PC-9 (cell line): ENCODE measurements at regions of chr19 and their contacts with region 1.

Region 1: GRCh38 chr19:14571695-14572490 is at the start of gene NDUFB7:
- DNase-seq: peak; percentile 88 to 93
- H3K4me3 ChIP-seq: peak within 1 kb of the TSS; percentile 66
- H3K27ac ChIP-seq: 0 out of 2 replicates have a peak within 1 kb of the TSS, but pooled peaks have one; percentile 10
- H3K4me1 ChIP-seq: peaks cover 14% of the 10 kb centered on the region
- H3K27me3 ChIP-seq: no peaks in the 10 kb centered on the region
- CTCF ChIP-seq: peak; percentile 69
- total RNA-seq, gene NDUFB7: 192 and 248 TPM in 2 replicates

Region 2: DNA sequence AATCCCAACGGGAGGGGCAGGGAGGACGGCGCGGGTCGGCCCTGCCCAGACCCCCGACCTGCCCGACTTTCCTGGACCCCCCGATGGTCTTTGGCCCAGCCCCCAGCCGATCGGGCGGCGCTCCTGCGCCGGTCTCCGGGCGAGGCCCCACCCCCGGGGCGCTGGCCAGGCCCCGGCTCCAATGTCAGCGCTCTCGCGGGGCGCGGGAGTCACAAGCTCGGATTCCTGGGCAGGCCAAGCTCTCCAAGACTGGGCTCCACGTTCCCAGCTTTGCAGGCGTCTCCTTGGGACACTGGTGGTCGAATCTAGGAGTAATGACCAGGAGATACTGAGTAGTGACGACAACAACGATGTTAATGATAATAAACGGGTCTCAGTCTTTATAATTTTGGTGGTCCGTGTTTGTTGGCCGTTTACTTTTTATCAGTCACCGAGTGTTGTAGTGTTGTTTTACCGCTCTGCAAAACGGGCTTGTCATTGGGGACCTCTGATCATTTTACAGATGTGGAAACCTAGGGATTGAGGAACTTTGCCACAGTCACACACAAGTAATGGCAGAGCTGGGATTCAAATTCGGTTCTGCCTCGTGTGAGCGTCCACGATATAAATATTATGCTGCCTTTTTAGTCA is 1625.7 kb before region 1 on chr19:
- CTCF ChIA-PET with region 1: no interaction called
- POLR2A ChIA-PET with region 1: interaction called, 10 read pairs
- intact Hi-C with region 1: no loop called
- DNase-seq: peak; percentile 70 to 73
- H3K4me3 ChIP-seq: peak overlapping the region; percentile 77
- H3K27ac ChIP-seq: peak overlapping the region; percentile 89
- H3K4me1 ChIP-seq: peaks cover 23% of the 10 kb centered on the region
- H3K27me3 ChIP-seq: no peaks in the 10 kb centered on the region
- CTCF ChIP-seq: no peak

Region 3: DNA sequence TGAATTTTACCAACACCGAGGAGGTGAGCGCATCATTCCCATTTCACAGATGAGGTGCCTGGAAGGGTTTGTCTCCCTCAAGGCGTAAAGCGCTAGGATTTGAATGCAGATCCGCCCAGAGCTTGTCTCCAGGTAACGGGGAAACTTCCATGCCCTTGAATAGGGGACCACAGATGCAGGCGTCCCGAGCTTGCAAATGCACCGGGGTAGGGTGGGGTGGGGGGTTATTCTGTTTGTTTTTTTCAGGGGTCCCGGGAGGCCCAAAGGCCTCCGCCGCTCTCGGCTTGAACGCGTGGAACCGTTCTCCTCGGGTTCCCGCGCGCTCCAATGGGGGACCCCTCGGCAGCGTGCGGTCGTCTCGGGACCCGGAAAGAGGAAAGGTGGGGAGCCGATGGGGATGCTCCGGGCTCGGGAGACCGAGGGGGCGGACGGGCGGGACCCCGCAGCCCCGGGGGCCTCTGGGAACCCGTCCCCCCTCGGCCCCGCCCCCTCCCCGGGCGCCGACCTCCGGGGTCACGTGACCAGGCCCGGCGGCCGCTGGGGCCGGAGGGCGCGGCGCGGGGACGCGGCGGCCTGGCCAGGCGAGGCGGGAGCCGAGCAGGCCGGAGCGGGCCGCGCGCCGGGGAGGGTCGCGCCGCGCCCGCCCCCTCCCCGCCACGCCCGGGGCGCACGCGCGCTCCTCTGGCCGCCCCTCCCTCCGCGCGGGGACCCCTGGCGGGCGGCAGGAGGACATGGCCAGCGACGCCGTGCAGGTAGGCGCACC is 138.9 kb before region 1 on chr19 and contains the start of gene PKN1:
- CTCF ChIA-PET with region 1: interaction called, 14 read pairs
- POLR2A ChIA-PET with region 1: no interaction called
- intact Hi-C with region 1: no loop called
- DNase-seq: peak; percentile 38 to 66
- H3K4me3 ChIP-seq: peak within 1 kb of the TSS; percentile 93
- H3K27ac ChIP-seq: peak within 1 kb of the TSS; percentile 51
- H3K4me1 ChIP-seq: peaks cover 24% of the 10 kb centered on the region
- H3K27me3 ChIP-seq: no peaks in the 10 kb centered on the region; the same call in 1 of the 2 replicates
- CTCF ChIP-seq: no peak
- total RNA-seq, gene PKN1: 257 and 417 TPM in 2 replicates

Region 4: DNA sequence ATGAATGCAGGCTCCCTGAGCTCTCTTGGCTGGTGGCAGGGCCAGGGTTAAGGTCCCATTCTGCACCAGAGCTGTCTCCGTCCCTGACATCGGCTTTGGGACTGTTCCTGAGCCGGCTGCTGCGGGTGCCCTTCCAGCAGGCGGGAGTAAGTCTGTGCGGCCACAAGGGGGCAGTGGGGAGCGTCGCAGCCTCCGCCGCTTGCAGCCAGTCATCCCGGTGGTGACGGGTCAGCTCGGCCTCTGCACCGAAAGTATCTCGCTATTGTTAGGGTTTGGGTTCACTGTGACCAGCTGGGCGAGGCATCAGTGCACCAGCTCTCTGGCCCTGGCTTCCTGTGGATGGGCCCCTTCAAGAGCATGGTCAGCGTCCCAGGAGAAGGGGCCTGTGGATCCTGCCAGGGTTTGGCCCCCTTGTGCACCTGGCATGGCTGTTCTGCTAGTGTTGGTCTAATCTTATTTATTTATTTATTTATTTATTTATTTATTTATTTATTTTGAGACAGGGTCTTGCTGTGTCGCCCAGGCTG is 15.2 kb before region 1 on chr19:
- CTCF ChIA-PET with region 1: no interaction called
- POLR2A ChIA-PET with region 1: no interaction called
- intact Hi-C with region 1: no loop called
- DNase-seq: peak; percentile 59 to 77
- H3K4me3 ChIP-seq: no peak overlapping the region
- H3K27ac ChIP-seq: 0 out of 2 replicates have a peak overlapping the region, but pooled peaks have one; percentile 1
- H3K4me1 ChIP-seq: 0 out of 2 replicates have a peak, but pooled peaks cover 6% of the 10 kb centered on the region
- H3K27me3 ChIP-seq: no peaks in the 10 kb centered on the region
- CTCF ChIP-seq: peak; percentile 97

Region 5: GRCh38 chr19:14689598-14690503 is 118.0 kb after region 1 on chr19 and contains the start of gene ZNF333:
- CTCF ChIA-PET with region 1: interaction called, 9 read pairs
- POLR2A ChIA-PET with region 1: interaction called, 12 read pairs
- intact Hi-C with region 1: loop called (anchors 2 kb)
- DNase-seq: peak; percentile 78 to 92
- H3K4me3 ChIP-seq: peak within 1 kb of the TSS; percentile 69
- H3K27ac ChIP-seq: peak within 1 kb of the TSS; percentile 88
- H3K4me1 ChIP-seq: peaks cover 16% of the 10 kb centered on the region
- H3K27me3 ChIP-seq: no peaks in the 10 kb centered on the region
- CTCF ChIP-seq: no peak
- total RNA-seq, gene ZNF333: 10.1 and 10.5 TPM in 2 replicates

Region 6: GRCh38 chr19:14871619-14872230 is 299.8 kb after region 1 on chr19:
- CTCF ChIA-PET with region 1: no interaction called
- POLR2A ChIA-PET with region 1: no interaction called
- intact Hi-C with region 1: loop called (anchors 5 kb)
- DNase-seq: peak; percentile 0 to 59
- H3K4me3 ChIP-seq: no peak overlapping the region
- H3K27ac ChIP-seq: no peak overlapping the region
- H3K4me1 ChIP-seq: peaks cover 6% of the 10 kb centered on the region; the same call in 1 of the 2 replicates
- H3K27me3 ChIP-seq: no peaks in the 10 kb centered on the region
- CTCF ChIP-seq: peak; percentile 91

Region 7: DNA sequence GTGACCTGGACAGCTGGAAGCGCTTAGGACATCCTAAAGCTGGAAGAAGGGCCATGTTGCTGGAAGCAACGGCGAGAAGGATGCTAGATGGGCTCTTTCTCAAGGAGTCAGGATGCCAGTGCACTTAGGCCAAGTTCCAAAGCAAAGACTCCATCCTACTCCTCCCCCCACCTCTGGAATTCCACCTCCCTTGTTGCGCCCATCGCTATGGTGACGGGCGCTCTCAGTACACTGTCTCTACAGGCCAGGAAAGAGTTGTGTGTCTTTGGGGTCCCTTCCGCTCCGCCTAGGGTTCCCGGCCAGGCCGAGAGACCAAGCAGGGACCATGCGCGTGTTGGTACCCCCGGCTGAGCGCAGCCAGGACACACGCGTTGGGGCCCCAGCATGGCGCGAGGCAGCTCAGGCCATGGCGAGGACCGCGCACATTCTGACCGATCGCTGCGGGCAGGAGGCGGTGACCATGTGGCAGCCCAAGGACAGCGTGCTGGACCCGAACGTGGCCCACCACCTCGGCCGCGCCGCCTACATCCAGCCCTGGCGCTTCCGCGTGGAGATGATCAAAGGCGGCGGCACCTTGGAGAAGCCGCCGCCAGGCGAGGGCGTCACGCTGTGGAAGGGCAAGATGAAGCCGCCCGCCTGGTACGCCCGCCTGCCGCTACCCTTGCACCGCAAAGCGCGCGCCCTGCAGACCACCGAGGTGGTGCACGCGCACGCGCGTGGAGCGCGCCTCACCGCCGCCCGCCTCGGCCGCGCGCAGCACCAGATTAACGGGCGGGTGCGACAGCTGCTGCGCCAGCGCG is 438.8 kb after region 1 on chr19:
- CTCF ChIA-PET with region 1: interaction called, 11 read pairs
- POLR2A ChIA-PET with region 1: no interaction called
- intact Hi-C with region 1: no loop called
- DNase-seq: no peak
- H3K4me3 ChIP-seq: no peak overlapping the region
- H3K27ac ChIP-seq: no peak overlapping the region
- H3K4me1 ChIP-seq: no peaks in the 10 kb centered on the region
- H3K27me3 ChIP-seq: 0 out of 2 replicates have a peak, but pooled peaks cover 3% of the 10 kb centered on the region
- CTCF ChIP-seq: no peak